ENCODE measurements at regions of chr14 and their contacts with region 1.

Region 1: DNA sequence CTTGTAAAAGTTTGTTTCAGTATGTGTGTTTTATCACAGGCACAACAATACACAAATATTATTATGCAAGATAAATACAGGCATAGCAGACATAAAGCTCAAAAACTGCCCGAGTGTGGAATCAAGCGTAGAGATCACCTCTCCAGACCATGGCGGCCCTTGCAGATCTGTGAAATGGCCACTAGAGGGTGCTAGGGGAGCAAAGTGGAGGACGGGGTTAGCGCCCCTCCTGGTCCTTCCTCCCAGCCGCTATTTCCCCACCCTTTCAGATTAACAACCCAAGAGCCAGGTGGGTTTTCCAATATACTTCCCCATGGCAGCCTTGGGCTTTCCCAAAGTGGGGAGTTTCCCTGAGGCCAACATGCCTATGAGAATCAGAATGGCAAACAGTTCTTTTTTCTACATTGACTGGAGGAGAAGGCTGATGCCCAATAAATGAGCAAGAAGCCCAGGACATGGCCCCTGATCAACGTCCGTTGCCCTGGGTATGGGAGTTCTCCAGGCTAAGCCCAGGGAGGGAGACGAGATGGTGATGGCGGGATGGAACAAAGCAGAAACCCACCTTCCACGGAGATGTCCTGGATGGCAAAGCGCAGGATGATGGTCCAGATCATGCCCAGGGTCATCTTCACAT is 67.4 kb downstream of the ACTN1 start:
- DNase-seq: peak; percentile 56
- H3K4me3 ChIP-seq: no peak overlapping the region
- H3K27ac ChIP-seq: peak overlapping the region; percentile 47
- H3K27me3 ChIP-seq: no peaks in the 10 kb centered on the region
- CTCF ChIP-seq: peak; percentile 100

Region 2: DNA sequence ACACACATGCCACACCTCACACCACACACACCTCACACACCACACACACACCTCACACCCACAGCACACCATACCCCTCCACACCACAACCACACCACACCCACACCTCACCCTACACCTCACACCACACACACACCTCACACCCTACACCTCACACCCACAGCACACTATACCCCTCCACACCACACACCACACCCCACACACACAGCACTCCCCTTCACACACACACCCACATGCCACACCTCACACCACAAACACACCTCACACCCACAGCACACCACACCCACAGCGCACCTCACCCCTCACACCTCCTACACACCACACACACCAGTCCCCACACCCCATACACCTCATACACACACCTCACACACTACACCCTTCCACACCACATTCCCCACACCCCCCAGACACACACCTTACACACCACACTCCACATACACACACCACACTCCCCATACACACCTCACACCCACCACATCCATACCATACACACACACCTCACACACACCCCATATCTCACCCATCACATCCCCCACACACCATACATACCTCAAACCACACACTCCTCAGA is 12.6 kb before region 1 on chr14:
- CTCF ChIA-PET with region 1: interaction called, 19 read pairs
- POLR2A ChIA-PET with region 1: no interaction called
- DNase-seq: no peak
- H3K4me3 ChIP-seq: no peak overlapping the region
- H3K27ac ChIP-seq: peak overlapping the region; percentile 49
- H3K27me3 ChIP-seq: no peaks in the 10 kb centered on the region
- CTCF ChIP-seq: no peak

Region 3: GRCh38 chr14:68939893-68940613 is 28.3 kb after region 1 on chr14:
- CTCF ChIA-PET with region 1: interaction called, 11 read pairs
- POLR2A ChIA-PET with region 1: interaction called, 5 read pairs
- DNase-seq: peak; percentile 80
- H3K4me3 ChIP-seq: no peak overlapping the region
- H3K27ac ChIP-seq: peak overlapping the region; percentile 90
- H3K27me3 ChIP-seq: no peaks in the 10 kb centered on the region
- CTCF ChIP-seq: no peak

Region 4: DNA sequence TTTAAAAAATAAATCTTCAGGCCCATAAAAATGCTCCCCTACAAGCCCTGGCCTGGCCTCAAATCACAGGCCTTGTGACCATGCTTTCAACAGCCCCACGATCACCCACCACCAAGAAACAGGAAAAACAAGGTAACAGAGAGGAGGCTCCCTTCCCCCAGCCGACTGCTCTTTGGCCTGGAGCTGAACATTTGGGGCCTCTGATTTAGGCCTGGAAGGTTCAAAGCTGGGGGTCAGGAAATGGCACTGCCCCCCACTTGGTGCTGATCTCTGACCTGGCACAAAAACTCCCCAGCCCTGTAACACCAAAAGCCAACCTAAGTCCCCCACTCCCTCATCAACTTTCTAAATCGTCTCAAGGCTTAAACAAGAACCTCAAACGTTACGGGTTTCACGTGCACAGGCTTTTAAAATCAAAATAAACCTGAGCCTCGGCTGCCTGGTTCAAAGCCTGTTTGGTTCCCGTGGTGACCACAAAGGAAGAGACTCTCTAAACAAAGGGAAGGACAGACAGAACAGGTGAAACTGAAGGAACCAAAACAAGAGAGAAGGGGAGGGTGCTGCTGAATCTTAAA is 58.4 kb after region 1 on chr14:
- CTCF ChIA-PET with region 1: interaction called, 11 read pairs
- POLR2A ChIA-PET with region 1: no interaction called
- DNase-seq: no peak
- H3K4me3 ChIP-seq: peak overlapping the region; percentile 29
- H3K27ac ChIP-seq: peak overlapping the region; percentile 68
- H3K27me3 ChIP-seq: no peaks in the 10 kb centered on the region
- CTCF ChIP-seq: no peak

Region 5: DNA sequence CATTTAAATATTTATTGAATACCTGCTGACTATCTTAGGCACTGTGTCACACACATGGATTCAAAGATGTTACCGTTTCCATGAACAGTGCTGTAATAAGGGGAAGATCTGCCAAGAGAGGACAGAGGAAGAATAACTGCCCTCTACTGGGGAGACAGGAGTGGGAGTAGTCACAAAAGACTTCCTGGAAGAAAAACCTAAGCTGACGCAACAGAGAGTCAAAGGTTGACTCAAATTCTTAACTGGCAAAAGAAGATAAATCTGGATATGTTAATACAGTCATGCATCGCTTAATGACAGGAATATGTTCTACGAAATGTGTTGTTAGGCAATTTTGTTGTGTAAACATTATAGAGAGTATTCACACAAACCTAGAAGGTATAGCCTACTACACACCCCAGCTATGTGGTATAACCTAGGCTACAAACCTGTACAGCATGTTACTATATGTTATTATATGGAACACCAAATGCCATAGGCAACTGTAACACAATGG is 189.7 kb after region 1 on chr14:
- CTCF ChIA-PET with region 1: interaction called, 53 read pairs
- POLR2A ChIA-PET with region 1: interaction called, 6 read pairs
- DNase-seq: peak; percentile 55
- H3K4me3 ChIP-seq: no peak overlapping the region
- H3K27ac ChIP-seq: no peak overlapping the region
- H3K27me3 ChIP-seq: no peaks in the 10 kb centered on the region
- CTCF ChIP-seq: peak; percentile 82